Left colon (tissue), 2 donors: ENCODE measurements at regions of chr19 and their contacts with region 1.

Region 1: DNA sequence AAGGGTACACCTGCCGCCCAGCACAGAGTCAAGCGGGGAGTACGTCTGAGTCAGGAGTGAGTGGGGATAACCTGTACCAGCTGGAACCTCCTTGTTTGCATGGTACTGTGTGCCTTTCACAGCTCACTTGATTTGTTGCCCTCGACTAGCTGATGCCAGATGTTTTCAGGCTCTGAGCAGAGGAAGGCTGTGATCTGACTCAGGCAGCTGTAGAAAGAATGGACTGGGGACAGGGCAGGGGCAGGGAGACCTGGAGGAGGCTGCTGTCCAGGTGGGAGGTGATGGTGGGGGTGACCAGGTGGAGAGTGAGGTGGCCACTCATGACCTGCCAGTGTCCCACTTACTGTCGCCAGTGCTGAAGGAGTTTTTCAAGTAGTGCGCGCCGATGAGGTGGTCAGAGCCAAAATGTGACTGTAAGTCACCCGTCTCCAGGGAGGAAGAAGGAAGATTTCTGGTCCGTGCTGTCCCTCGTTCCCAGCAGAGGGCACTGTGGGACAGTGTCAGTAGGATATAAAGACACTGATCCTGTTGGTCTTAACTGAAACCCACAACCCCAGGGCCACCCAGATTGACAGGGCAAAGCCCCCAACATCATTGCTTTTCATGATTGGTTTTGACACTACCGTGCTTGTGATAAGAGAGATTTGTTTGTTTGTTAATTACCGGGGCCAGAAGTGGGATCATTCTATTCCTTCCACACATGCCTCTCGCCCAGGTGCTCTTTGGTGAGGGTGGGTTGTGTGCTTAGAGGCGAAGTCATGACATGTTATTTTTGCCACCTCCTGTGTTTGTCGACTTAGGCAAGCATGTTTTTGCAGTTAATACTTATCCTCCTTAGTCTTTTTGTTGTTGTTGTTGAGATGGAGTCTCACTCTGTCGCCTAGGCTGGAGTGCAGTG is 128.4 kb downstream of the DPF1 start:
- DNase-seq: peak; percentile 53 to 79
- ATAC-seq: peak; percentile 82

Region 2: GRCh38 chr19:37906869-37907734 is 188.6 kb before region 1 on chr19 and contains the start of gene SIPA1L3:
- intact Hi-C with region 1: loop called in 1 of 2 experiments (anchors 10 kb)
- DNase-seq: peak; percentile 96 to 97
- ATAC-seq: peak; percentile 92
- total RNA-seq, gene SIPA1L3: 136 to 180 TPM